ENCODE measurements at regions of chr12 and their contacts with region 1.

Region 1: DNA sequence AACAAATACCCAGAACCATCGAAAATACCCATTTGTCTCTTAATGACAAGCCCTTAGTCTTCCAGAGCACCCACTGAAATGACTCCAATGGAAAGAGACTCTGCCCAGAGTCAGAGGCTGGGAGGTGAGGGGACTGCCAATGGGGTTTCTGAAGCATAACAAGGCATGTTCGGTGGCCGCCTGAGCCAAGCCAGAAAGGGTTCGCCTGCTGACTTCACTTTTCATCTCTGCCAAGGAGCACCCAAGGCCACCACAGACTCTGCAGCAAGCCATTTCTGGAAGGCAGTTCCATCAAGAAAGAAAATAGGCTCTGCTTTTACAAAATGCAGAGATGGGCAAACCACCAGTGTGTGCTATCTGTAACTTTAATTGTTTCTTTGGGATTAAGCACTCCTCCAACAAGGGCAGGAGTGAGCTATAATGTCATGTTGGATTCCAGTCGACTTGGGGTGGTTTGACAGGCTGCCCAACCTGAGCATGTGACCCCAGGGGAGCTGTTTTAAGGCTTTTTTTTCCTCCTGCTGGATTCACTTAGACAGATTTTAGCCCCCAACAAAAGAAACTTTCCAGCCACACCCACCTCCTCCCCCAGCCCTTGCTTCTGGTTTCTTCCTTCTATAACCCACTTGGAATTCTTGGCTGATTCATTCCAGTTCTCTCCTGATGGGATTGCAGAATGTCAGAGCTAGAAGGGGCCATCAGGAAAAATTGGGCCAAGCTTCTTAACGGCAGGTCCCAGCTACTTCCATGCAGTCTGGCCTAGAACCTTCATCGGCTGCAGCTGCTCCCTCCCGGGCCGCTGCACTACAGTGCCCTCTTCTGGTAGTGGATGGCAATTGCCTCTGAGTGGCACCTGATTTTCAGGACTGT is 24.1 kb downstream of the CKAP4 start:
- DNase-seq: peak in 1 of 2 experiments; percentile 70
- H3K4me3 ChIP-seq: no peak overlapping the region
- H3K27ac ChIP-seq: no peak overlapping the region
- H3K4me1 ChIP-seq: peaks cover 7% of the 10 kb centered on the region
- H3K27me3 ChIP-seq: no peaks in the 10 kb centered on the region
- CTCF ChIP-seq: peak; percentile 93

Region 2: GRCh38 chr12:105420659-105421240 is 803.0 kb before region 1 on chr12:
- CTCF ChIA-PET with region 1: interaction called, 4 read pairs
- POLR2A ChIA-PET with region 1: no interaction called
- intact Hi-C with region 1: loop called (anchors 1 kb)
- DNase-seq: peak; percentile 53 to 59
- H3K4me3 ChIP-seq: no peak overlapping the region
- H3K27ac ChIP-seq: no peak overlapping the region
- H3K4me1 ChIP-seq: 0 out of 2 replicates have a peak, but pooled peaks cover 5% of the 10 kb centered on the region
- H3K27me3 ChIP-seq: no peaks in the 10 kb centered on the region
- CTCF ChIP-seq: peak; percentile 97

Region 3: GRCh38 chr12:105455260-105455659 is 768.5 kb before region 1 on chr12:
- CTCF ChIA-PET with region 1: no interaction called
- POLR2A ChIA-PET with region 1: no interaction called
- intact Hi-C with region 1: loop called (anchors 1 kb)
- DNase-seq: peak; percentile 38 to 62
- H3K4me3 ChIP-seq: no peak overlapping the region
- H3K27ac ChIP-seq: no peak overlapping the region
- H3K4me1 ChIP-seq: 0 out of 2 replicates have a peak, but pooled peaks cover 6% of the 10 kb centered on the region
- H3K27me3 ChIP-seq: no peaks in the 10 kb centered on the region
- CTCF ChIP-seq: no peak

Region 4: DNA sequence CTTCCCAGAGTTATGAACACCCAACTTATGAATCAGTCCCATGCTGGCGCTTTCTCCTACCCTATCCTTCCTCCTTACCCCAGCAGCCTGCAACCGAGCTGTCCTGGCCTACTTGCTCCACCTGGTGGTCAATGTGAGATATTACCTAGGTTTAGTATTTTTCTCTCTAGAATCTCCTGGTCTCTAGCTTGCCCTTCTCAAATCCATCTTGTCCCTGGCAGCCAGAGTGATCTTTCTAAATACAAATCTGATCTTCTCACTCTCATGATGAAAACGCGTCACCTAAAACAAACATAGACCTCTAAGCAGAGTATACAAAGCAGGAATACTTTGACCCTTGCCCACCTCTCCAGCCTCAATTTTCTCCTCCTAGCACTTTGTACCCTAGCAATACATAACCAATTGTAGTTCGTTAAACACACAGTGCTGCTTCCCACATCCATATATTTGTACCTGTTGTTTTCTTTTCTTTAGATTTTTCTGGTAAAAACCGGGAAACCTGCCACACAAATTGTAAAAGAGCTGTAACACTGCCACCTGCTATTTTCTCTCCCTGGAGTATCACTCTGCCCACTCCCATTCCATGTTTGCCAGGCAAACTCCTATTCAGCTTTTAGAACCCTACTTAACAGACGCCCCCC is 58.9 kb after region 1 on chr12:
- CTCF ChIA-PET with region 1: interaction called, 4 read pairs
- POLR2A ChIA-PET with region 1: no interaction called
- intact Hi-C with region 1: loop called (anchors 1 kb)
- DNase-seq: peak; percentile 15 to 62
- H3K4me3 ChIP-seq: no peak overlapping the region
- H3K27ac ChIP-seq: no peak overlapping the region
- H3K4me1 ChIP-seq: peaks cover 5% of the 10 kb centered on the region
- H3K27me3 ChIP-seq: no peaks in the 10 kb centered on the region
- CTCF ChIP-seq: peak; percentile 86

Region 5: DNA sequence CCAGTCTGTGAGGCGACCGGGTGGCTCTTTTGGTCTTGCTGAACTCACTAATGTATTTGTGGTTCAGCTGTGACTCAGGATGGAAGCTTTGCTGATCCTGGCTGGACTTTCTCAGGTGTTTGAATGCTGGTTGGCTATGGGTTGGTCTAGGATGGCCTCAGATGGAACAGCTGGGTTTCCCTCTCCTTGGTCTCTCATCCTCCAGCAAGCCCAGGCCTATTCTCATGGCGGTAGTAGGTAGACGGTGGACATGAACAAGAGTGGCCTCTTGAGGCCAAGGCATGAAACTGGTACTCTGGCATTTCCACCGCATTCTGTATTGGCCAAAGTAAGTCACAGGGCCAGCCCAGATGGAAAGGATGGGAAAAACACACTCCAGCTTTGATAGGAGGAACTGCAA is 122.0 kb after region 1 on chr12:
- CTCF ChIA-PET with region 1: no interaction called
- POLR2A ChIA-PET with region 1: no interaction called
- intact Hi-C with region 1: loop called (anchors 5 kb)
- DNase-seq: peak; percentile 10 to 40
- H3K4me3 ChIP-seq: no peak overlapping the region
- H3K27ac ChIP-seq: no peak overlapping the region
- H3K4me1 ChIP-seq: peaks cover 16% of the 10 kb centered on the region
- H3K27me3 ChIP-seq: no peaks in the 10 kb centered on the region
- CTCF ChIP-seq: peak; percentile 51; the same call in 1 of the 2 replicates

Region 6: GRCh38 chr12:106386813-106387535 is 163.3 kb after region 1 on chr12:
- CTCF ChIA-PET with region 1: interaction called, 13 read pairs
- POLR2A ChIA-PET with region 1: no interaction called
- intact Hi-C with region 1: loop called (anchors 5 kb)
- DNase-seq: peak in 1 of 2 experiments; percentile 57
- H3K4me3 ChIP-seq: no peak overlapping the region
- H3K27ac ChIP-seq: no peak overlapping the region
- H3K4me1 ChIP-seq: no peaks in the 10 kb centered on the region
- H3K27me3 ChIP-seq: no peaks in the 10 kb centered on the region
- CTCF ChIP-seq: no peak

Region 7: GRCh38 chr12:106841510-106842302 is 618.0 kb after region 1 on chr12:
- CTCF ChIA-PET with region 1: no interaction called
- POLR2A ChIA-PET with region 1: no interaction called
- intact Hi-C with region 1: loop called (anchors 2 kb)
- DNase-seq: peak in 1 of 2 experiments; percentile 14
- H3K4me3 ChIP-seq: no peak overlapping the region
- H3K27ac ChIP-seq: no peak overlapping the region
- H3K4me1 ChIP-seq: peaks cover 16% of the 10 kb centered on the region
- H3K27me3 ChIP-seq: no peaks in the 10 kb centered on the region
- CTCF ChIP-seq: peak; percentile 78